PC-9 (cell line): ENCODE measurements at regions of chr3 and their contacts with region 1.

Region 1: DNA sequence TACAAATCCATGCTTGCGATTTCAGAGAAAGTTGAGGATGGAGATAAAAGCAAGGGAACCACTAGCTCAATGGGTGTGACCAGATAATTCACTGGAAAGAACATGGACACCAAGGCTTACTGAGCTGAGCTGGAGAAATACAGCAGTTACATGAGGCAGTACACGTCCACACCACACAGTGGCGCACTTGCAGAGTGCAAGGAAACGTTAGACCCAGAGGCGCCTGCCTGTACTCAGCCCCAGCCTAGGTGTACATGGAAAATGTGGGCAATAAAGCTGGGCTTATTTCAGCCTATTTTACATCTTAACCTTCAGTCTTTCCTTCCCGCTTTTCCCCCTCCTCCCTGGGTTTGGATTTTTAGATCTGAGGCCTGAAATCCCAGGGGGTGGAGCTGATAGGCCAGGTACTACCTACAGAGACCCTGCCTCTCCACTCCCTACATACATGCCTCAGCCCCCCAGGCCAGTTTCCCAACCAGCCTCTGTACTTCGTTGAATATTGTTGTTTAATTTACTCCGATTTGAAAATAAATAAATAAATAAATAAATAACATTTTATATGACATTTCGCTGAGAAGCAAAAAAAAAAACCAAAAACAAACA is 60.1 kb downstream of the PCOLCE2 start:
- DNase-seq: peak; percentile 61 to 81
- H3K4me3 ChIP-seq: no peak overlapping the region
- H3K27ac ChIP-seq: no peak overlapping the region
- H3K4me1 ChIP-seq: no peaks in the 10 kb centered on the region
- H3K27me3 ChIP-seq: no peaks in the 10 kb centered on the region
- CTCF ChIP-seq: peak; percentile 90

Region 2: GRCh38 chr3:142888481-142889211 is 59.8 kb after region 1 on chr3 and contains the start of gene PCOLCE2:
- CTCF ChIA-PET with region 1: no interaction called
- POLR2A ChIA-PET with region 1: no interaction called
- intact Hi-C with region 1: no loop called
- DNase-seq: peak in 1 of 2 experiments; percentile 43
- H3K4me3 ChIP-seq: peak within 1 kb of the TSS; percentile 84
- H3K27ac ChIP-seq: no peak within 1 kb of the TSS
- H3K4me1 ChIP-seq: peaks cover 13% of the 10 kb centered on the region
- H3K27me3 ChIP-seq: no peaks in the 10 kb centered on the region
- CTCF ChIP-seq: no peak
- total RNA-seq, gene PCOLCE2: 1.5 and 2.5 TPM in 2 replicates

Region 3: GRCh38 chr3:142929109-142929508 is 100.3 kb after region 1 on chr3:
- CTCF ChIA-PET with region 1: no interaction called
- POLR2A ChIA-PET with region 1: no interaction called
- intact Hi-C with region 1: loop called (anchors 5 kb)
- DNase-seq: peak; percentile 49 to 56
- H3K4me3 ChIP-seq: no peak overlapping the region
- H3K27ac ChIP-seq: no peak overlapping the region
- H3K4me1 ChIP-seq: no peaks in the 10 kb centered on the region
- H3K27me3 ChIP-seq: no peaks in the 10 kb centered on the region
- CTCF ChIP-seq: peak; percentile 74

Region 4: GRCh38 chr3:142987080-142987700 is 158.4 kb after region 1 on chr3:
- CTCF ChIA-PET with region 1: interaction called, 8 read pairs
- POLR2A ChIA-PET with region 1: no interaction called
- intact Hi-C with region 1: loop called (anchors 1 kb)
- DNase-seq: peak in 1 of 2 experiments; percentile 55
- H3K4me3 ChIP-seq: no peak overlapping the region
- H3K27ac ChIP-seq: no peak overlapping the region
- H3K4me1 ChIP-seq: no peaks in the 10 kb centered on the region
- H3K27me3 ChIP-seq: no peaks in the 10 kb centered on the region
- CTCF ChIP-seq: peak; percentile 79

Region 5: GRCh38 chr3:142993958-142994442 is 165.2 kb after region 1 on chr3:
- CTCF ChIA-PET with region 1: interaction called, 8 read pairs
- POLR2A ChIA-PET with region 1: no interaction called
- intact Hi-C with region 1: loop called (anchors 1 kb)
- DNase-seq: peak; percentile 67 to 70
- H3K4me3 ChIP-seq: no peak overlapping the region
- H3K27ac ChIP-seq: no peak overlapping the region
- H3K4me1 ChIP-seq: peaks cover 21% of the 10 kb centered on the region
- H3K27me3 ChIP-seq: no peaks in the 10 kb centered on the region
- CTCF ChIP-seq: peak; percentile 85